Posterior cingulate gyrus (tissue), 11 donors: ENCODE measurements at regions of chr9 and their contacts with region 1.

Region 1: DNA sequence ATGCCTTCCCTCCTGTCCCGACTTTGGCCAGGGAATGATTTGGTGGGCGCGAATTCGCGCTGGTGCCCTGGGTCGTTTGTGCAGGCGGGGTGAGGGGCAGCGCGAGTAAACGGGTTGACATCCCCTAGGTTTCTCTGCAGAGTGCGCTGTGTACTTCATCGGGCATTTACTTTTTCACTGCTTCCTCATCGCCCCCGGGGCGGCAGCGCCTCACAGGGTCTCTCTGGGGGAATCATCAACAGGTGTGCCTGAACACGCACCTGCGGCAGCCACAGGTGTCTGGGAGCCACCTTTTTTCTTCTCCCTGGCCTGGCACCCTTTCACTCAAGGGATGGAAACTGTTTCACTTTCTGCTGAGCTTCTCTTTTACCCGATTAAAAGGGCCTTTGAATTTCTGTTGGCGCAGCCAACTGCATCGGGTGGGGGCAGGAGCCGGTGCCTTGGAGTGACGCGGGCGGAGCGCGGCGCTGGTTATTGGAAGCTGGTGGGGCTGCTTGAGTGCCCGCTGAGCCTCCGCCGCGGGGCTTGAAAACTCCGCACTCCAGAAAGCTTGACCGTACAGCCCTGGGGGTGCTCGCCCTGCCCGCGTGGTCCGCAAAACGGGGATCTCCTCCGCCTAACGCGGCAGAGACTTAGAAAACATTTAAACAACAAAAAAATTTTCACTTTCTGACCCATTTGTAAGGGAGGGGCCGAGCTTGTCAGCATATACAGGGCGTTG is 52.1 kb upstream of the TJP2 start:
- DNase-seq: peak; percentile 66 to 97 (median 74)

Region 2: DNA sequence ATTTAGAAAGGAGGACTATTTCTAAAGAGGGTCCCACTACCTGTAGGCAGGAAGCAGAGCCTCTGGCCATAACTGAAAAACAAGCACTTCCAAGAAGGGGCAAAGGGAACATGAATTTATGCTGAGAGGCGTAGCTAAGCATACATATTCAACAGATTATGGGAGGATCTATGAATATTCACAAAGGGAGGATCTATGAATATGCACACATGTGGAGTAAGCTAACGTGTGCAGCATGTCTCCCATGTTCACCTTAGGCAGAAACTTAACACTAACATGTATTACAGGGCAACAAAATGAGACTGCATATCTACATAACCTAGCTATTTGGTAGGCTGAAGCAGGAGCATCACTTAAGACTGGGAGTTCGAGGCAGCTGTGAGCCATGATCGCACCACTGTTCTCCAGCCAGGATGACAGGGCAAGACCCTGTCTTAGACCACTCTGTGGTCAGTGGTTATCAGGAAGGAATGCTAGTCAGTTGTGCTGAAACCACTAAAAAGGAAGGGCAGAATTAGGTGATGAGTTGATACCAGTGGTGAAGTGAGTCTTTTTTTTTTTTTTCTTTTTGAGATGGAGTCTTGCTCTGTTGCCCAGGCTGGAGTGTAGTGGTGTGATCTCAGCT is 65.7 kb before region 1 on chr9:
- intact Hi-C with region 1: loop called (anchors 10 kb)
- DNase-seq: no peak

Region 3: DNA sequence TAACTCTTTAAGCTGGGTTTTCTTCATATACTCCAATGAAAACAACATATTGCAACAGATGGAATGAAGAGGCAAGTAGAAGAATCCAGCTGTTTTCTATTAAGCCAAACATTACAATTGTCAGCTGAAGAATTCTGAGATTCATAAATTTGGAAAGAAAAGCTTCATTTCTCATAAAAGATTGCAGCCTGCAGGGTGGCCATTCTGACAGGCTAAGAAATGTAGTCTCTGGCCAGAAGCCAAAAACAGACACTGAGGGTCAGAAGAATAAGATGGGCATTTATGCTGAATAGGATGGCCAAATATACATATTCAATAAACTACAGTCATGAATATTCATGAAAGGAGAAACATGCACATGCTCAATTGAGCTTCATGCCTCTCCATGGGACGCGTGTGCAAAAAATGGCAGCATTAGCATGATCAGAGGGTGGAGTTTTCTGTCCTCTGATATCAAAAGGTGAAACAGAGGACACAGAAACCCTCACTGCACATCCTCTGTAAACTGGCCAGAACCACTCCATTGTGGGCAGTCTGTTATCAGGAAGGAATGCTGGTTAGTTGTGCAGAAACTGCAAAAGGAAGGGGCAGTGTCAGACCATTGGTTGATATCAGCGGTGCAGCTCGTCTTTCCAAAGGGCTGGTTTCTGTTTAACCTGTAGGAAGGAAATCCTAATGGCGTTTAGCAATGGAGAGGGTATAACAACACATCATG is 36.3 kb before region 1 on chr9:
- intact Hi-C with region 1: no loop called
- DNase-seq: no peak

Region 4: DNA sequence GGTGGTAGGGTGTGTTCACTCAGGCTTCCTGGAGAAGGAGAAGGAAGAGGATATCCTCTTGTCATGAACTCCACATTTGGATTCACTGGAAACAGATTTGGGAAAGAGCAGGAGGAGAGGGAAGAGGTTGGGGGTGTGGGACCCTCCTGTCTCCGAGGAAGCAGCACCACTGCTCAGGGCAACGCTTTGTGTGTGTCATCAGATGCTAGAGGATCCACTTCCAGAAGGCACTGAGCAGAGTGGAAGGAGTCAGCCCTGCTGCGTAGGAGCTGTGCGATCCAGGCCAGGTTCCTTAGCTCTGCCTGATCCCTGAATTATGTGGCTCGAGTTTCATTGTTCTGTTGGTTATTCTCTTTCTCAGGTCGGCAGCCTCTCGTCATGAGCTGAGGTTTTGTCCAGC is 14.8 kb after region 1 on chr9:
- intact Hi-C with region 1: no loop called
- DNase-seq: no peak